Mammary epithelial cell (primary cell): ENCODE measurements at regions of chr13 and their contacts with region 1.

Region 1: DNA sequence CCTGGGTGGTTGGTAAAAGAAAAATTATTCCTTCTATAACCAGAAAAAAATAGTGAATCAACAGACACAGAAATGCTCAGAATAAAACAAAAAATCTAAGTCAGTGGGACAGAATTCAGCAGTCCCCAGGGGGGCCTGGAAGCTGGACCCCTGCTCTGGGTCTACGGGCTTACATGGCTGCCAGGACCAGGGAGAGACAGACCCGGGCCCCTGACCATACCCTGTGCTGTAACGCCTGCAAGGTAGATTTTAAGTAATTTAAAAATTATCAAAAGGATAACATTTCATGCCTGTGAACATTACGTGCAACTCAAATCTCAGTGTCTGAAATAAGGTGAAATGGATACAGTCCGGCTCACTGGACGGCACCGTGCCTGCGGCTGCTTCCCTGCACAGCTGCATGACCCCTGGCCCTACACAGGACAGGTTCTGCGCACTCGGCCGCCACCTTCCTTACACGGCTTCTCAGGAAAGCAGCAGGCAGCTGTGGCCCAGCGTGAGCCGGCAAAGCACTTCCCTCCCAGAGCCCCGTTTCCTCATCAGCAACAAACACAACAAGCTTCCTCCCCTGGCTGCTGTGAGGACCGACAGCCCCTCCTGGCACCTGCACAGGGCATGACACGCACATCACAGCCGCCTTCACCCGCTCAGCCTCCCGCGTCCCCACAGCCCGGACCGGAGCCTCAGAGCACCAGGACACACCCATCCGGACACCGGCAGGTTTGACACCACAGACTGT is 22.2 kb downstream of the RASA3 start:
- DNase-seq: no peak
- H3K4me3 ChIP-seq: no peak overlapping the region
- H3K27ac ChIP-seq: no peak overlapping the region
- H3K4me1 ChIP-seq: peaks cover 11% of the 10 kb centered on the region
- H3K27me3 ChIP-seq: no peaks in the 10 kb centered on the region
- CTCF ChIP-seq: no peak

Region 2: GRCh38 chr13:113816946-113817859 is 293.1 kb before region 1 on chr13:
- CTCF ChIA-PET with region 1: no interaction called
- dilution Hi-C with region 1: no loop called
- in situ Hi-C with region 1: no loop called
- intact Hi-C with region 1: no loop called
- DNase-seq: peak; percentile 75
- H3K4me3 ChIP-seq: no peak overlapping the region
- H3K27ac ChIP-seq: no peak overlapping the region
- H3K4me1 ChIP-seq: peaks cover 30% of the 10 kb centered on the region
- H3K27me3 ChIP-seq: no peaks in the 10 kb centered on the region
- CTCF ChIP-seq: peak; percentile 76 to 95

Region 3: GRCh38 chr13:113887700-113888201 is 222.5 kb before region 1 on chr13:
- CTCF ChIA-PET with region 1: no interaction called
- dilution Hi-C with region 1: no loop called
- in situ Hi-C with region 1: no loop called
- intact Hi-C with region 1: no loop called
- DNase-seq: no peak
- H3K4me3 ChIP-seq: no peak overlapping the region
- H3K27ac ChIP-seq: no peak overlapping the region
- H3K4me1 ChIP-seq: peaks cover 6% of the 10 kb centered on the region
- H3K27me3 ChIP-seq: no peaks in the 10 kb centered on the region
- CTCF ChIP-seq: no peak

Region 4: GRCh38 chr13:113997845-113998668 is 112.2 kb before region 1 on chr13:
- CTCF ChIA-PET with region 1: no interaction called
- dilution Hi-C with region 1: loop called (anchors 5 kb)
- in situ Hi-C with region 1: no loop called
- intact Hi-C with region 1: no loop called
- DNase-seq: no peak
- H3K4me3 ChIP-seq: no peak overlapping the region
- H3K27ac ChIP-seq: no peak overlapping the region
- H3K4me1 ChIP-seq: no peaks in the 10 kb centered on the region
- H3K27me3 ChIP-seq: peaks cover 2% of the 10 kb centered on the region
- CTCF ChIP-seq: no peak

Region 5: DNA sequence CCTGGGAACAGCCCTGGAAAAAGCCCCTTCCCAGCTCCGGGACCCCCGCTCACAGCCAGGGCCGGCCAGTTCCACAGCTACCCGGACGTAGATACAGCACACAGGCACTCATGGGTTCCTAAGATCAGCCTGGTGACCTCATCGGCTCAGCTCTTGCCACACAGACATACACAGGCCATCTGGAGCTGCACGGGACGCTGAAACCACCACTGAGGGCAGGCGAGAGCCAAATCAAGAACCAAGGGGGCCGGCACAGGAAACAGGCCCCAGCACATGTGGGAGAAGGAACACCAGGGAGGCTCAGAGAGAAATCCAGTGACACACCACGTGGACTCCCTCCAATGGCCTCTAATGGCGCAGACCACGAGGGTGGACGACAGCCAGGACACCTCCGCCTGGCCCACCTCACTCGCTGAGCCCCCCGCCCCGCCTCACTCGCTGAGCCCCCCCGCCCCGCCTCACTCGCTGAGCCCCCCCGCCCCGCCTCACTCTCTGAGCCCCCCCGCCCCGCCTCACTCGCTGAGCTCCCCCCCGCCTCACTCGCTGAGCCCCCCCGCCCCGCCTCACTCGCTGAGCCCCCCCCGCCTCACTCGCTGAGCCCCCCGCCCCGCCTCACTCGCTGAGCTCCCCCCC is 66.7 kb before region 1 on chr13:
- CTCF ChIA-PET with region 1: no interaction called
- dilution Hi-C with region 1: no loop called
- in situ Hi-C with region 1: no loop called
- intact Hi-C with region 1: no loop called
- DNase-seq: no peak
- H3K4me3 ChIP-seq: no peak overlapping the region
- H3K27ac ChIP-seq: no peak overlapping the region
- H3K4me1 ChIP-seq: no peaks in the 10 kb centered on the region
- H3K27me3 ChIP-seq: no peaks in the 10 kb centered on the region
- CTCF ChIP-seq: no peak

Region 6: DNA sequence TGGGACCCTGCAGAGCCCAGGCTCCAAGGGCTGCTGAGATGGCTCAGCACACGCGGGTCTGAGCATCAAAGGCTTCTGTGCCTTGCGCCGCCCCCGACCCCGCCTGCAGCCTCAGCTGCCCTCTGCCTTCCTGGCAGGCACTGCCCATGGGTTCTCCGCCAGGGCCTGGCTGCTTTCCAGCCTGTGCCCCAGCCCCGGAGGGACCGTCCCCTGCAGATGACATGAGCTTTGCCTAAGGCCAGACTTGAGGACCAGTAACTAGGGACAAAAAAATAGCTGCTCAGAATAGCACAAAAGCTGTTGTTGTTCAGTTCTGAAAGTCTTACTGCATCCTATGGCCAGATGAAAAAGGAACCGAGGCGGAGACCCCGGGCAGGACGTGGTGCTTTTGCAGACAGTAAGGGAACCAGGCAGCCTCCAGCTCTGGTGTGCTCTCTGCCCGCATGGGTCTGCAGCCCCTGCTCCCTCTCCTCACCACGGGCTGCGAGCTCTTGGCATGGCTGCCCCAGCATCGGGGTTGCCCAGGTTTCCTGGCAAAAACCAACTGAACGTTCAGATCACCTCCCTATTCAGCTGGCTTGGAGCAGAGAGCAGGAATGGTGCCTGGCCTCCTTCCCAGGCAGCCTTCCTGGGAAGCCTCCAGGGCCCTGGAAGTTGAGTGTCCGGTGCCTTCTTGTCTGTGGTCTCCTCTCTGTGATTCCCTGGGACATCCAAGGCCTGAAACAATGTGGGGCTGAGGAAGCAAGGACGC is 56.3 kb after region 1 on chr13:
- CTCF ChIA-PET with region 1: no interaction called
- dilution Hi-C with region 1: loop called (anchors 5 kb)
- in situ Hi-C with region 1: no loop called
- intact Hi-C with region 1: no loop called
- DNase-seq: no peak
- H3K4me3 ChIP-seq: no peak overlapping the region
- H3K27ac ChIP-seq: no peak overlapping the region
- H3K4me1 ChIP-seq: no peaks in the 10 kb centered on the region
- H3K27me3 ChIP-seq: peaks cover 10% of the 10 kb centered on the region
- CTCF ChIP-seq: no peak